Activated CD8-positive, alpha-beta T cell treated with anti-CD3 and anti-CD28 coated beads for 36 hours (primary cell): ENCODE measurements at regions of chr1 and their contacts with region 1.

Region 1: DNA sequence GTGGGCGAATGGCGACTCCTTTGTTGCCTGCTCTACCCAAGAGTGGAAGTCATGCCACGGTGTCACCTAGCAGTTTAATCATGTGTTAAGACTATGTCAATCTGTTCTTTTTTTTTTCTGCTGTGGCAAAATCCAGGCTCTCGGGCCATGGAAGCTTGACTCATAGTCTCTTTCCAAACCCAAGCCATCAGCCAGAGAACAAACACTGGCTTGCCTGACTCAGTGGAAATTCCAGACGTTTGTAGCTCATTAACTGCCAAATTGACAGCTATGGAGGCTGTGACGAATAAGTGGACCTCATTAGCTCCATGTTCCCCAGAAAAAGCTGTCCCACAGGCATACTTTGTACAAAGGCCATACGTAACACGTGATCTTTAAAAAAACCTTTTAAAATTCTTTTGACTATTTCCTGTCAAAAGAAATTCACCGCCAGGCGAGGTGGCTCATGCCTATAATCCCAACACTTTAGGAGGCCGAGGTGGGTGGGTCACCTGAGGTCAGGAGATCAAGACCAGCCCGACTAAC is 8.0 kb upstream of the PNRC2 start:
- DNase-seq: no peak
- ATAC-seq: no peak
- H3K4me3 Mint-ChIP-seq: no peak overlapping the region
- H3K27ac Mint-ChIP-seq: no peak overlapping the region
- H3K4me1 Mint-ChIP-seq: peaks cover 13% of the 10 kb centered on the region
- H3K27me3 Mint-ChIP-seq: no peaks in the 10 kb centered on the region
- CTCF ChIP-seq: no peak

Region 2: GRCh38 chr1:23930861-23931490 is 20.7 kb before region 1 on chr1:
- CTCF ChIA-PET with region 1: interaction called, 10 read pairs
- POLR2A ChIA-PET with region 1: interaction called, 3 read pairs
- intact Hi-C with region 1: no loop called
- DNase-seq: no peak
- ATAC-seq: no peak
- H3K4me3 Mint-ChIP-seq: no peak overlapping the region
- H3K27ac Mint-ChIP-seq: no peak overlapping the region
- H3K4me1 Mint-ChIP-seq: no peaks in the 10 kb centered on the region
- H3K27me3 Mint-ChIP-seq: no peaks in the 10 kb centered on the region
- CTCF ChIP-seq: no peak

Region 3: DNA sequence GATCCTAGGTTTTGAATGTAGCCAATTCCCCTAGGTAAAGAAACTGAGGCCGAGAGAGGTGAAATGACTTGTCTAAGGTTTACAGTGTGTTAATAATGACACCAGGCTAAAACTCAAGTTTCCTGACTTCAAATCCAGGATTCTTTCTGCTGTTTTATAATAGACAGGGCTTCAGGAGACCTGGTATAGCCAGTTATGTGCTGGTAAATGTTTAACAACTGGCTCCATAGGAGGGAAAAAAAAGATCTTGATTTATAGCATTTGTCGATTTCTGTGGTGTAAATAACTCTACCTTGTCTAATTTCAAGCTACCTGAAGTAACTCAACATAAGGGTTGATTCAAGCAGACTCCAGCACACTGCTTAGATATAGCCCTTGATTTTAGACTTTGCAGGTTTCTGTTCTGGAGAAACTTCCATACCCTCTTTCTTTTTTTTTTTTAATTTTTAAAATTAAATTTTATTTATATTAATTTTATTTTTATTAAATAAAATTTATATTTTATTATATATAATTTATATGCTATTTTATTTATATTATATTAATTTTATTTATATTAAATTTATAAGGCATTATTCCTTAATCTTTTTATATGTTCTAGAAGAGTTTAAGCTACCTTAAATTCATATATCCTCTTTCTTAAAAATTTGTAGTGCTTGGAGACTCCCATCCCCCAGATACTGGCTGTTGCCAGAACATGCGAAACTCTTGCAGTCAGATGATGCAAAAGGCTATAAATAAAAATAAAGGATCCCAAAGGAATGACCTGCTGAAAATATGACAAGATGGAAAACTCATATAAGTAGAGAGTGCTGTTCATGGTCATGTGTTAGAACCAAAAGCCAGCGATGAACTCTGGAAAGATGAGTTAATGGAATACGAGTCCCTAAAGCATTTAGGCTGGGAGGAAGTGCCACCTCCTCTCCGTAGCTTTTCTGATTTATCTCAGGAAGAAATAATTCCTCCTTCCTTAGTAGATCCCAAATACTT is 63.9 kb after region 1 on chr1:
- CTCF ChIA-PET with region 1: no interaction called
- POLR2A ChIA-PET with region 1: no interaction called
- intact Hi-C with region 1: no loop called
- DNase-seq: no peak
- ATAC-seq: no peak
- H3K4me3 Mint-ChIP-seq: no peak overlapping the region
- H3K27ac Mint-ChIP-seq: no peak overlapping the region
- H3K4me1 Mint-ChIP-seq: no peaks in the 10 kb centered on the region
- H3K27me3 Mint-ChIP-seq: peaks cover 8% of the 10 kb centered on the region
- CTCF ChIP-seq: no peak